ENCODE measurements at regions of chr16 and their contacts with region 1.

Region 1: DNA sequence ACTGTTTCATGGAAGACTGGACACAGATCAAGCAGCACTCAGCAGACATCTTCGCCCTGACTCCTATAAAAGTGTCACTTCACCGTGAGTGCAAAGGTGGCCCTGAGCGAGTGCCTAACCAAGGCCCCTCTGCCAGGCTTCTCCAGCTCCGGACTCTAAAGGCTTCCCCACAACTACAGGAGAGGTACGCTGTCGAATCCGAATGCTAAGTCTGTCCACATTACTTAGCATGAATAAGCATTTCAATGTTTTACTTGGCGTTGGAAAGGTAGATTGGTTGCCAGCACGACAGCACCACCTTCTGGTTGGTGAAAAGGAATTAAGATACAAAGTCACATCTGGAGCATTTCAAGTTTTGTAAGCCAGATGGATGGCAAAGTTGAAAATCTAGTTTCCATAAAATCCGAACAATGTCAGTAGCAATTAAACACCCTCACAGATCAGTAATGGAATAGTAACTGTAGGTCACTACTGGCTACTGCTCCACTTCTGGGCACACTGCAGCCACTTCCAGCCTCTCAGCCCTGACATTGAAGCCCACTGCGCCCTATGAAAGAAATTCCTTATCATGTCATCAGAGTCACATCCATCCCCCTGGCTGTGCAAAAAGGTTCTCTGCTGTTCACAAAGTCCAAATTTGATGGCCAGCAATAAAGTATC is 100.9 kb downstream of the PARN start:
- DNase-seq: peak; percentile 71 to 87
- ATAC-seq: peak; percentile 89 to 92 (median 90)
- H3K4me3 ChIP-seq: peak overlapping the region; percentile 53
- H3K27ac ChIP-seq: peak overlapping the region; percentile 87
- H3K4me1 ChIP-seq: peaks cover 26% of the 10 kb centered on the region
- H3K27me3 ChIP-seq: no peaks in the 10 kb centered on the region
- CTCF ChIP-seq: peak; percentile 79

Region 2: GRCh38 chr16:14249291-14250032 is 279.7 kb before region 1 on chr16:
- intact Hi-C with region 1: loop called in 1 of 2 experiments (anchors 2 kb)
- DNase-seq: no peak
- ATAC-seq: peak in 2 of 4 donors; percentile 68 to 79
- H3K4me3 ChIP-seq: no peak overlapping the region
- H3K27ac ChIP-seq: no peak overlapping the region
- H3K4me1 ChIP-seq: peaks cover 7% of the 10 kb centered on the region
- H3K27me3 ChIP-seq: no peaks in the 10 kb centered on the region
- CTCF ChIP-seq: peak; percentile 77

Region 3: DNA sequence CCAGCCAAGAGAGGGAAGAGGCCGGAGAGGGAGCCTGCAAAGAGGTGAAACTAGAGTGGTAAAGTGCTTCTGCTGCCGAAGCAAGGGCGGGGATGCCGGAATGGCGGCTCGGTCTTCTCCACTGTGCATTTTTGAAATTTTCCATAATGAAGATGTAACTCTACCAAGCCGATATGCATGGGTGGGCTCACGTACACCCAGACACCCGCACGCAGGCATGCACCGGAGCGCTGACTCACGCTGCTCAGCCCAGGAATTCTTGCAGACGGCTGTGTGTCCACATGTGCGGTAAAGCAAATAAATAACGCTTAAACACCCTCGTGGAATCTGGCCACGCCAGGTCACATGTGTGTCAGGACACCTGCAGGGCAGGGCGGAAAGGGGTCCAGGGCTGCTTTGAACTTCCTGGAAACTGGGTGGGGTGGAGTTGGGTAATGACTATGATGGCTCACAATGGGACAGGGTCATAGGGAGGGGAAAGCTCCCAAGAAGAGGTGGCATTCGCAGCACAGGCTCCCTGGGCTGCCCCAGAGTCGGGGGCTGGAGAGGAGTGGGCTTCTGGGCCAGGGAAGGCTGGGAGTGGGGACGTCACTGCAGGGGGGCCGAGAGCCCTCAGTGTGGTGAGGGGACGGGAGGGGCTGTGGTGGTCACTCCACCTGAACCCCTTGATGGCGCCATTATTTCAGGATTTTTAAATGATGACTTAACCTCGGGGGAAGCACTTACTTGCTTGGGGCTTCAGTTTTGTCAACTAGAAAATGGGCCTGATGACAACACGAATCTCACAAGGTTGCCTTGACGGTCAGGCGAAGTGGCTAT is 164.5 kb before region 1 on chr16:
- intact Hi-C with region 1: loop called in 1 of 2 experiments (anchors 5 kb)
- DNase-seq: no peak
- ATAC-seq: peak; percentile 16 to 67 (median 37)
- H3K4me3 ChIP-seq: no peak overlapping the region
- H3K27ac ChIP-seq: peak overlapping the region; percentile 89
- H3K4me1 ChIP-seq: peaks cover 10% of the 10 kb centered on the region
- H3K27me3 ChIP-seq: no peaks in the 10 kb centered on the region
- CTCF ChIP-seq: no peak

Region 4: DNA sequence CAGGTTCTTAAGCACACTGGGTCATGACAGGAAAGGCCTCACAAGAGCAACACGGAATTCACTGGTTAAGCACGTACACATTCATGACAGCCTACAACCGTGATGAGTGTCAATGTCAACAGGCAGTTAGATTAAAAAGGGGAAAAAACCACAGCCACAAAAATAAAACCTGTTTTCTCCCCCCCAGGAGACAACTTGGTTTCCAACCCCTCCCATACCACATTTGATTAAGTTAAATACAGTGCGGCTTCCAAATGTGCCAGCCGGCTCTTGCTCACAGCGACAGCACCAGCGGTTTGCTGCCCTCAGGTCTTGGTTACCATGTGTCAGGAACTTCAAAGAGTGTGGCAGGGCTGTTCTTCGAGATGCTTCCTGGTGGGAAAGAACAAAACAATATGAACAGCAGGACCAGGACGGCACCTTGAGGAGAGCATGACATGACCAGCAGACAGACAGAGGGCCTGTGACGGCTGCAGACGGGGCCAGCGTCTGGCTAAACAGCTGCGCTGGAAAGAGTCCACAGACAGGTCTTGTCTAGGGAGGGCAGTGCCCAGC is 92.7 kb before region 1 on chr16:
- intact Hi-C with region 1: loop called in 1 of 2 experiments (anchors 10 kb)
- DNase-seq: peak; percentile 43 to 83
- ATAC-seq: peak; percentile 95 to 98 (median 96)
- H3K4me3 ChIP-seq: peak overlapping the region; percentile 40
- H3K27ac ChIP-seq: peak overlapping the region; percentile 83
- H3K4me1 ChIP-seq: peaks cover 20% of the 10 kb centered on the region
- H3K27me3 ChIP-seq: no peaks in the 10 kb centered on the region
- CTCF ChIP-seq: no peak